ENCODE measurements at regions of chr19 and their contacts with region 1.

Region 1: DNA sequence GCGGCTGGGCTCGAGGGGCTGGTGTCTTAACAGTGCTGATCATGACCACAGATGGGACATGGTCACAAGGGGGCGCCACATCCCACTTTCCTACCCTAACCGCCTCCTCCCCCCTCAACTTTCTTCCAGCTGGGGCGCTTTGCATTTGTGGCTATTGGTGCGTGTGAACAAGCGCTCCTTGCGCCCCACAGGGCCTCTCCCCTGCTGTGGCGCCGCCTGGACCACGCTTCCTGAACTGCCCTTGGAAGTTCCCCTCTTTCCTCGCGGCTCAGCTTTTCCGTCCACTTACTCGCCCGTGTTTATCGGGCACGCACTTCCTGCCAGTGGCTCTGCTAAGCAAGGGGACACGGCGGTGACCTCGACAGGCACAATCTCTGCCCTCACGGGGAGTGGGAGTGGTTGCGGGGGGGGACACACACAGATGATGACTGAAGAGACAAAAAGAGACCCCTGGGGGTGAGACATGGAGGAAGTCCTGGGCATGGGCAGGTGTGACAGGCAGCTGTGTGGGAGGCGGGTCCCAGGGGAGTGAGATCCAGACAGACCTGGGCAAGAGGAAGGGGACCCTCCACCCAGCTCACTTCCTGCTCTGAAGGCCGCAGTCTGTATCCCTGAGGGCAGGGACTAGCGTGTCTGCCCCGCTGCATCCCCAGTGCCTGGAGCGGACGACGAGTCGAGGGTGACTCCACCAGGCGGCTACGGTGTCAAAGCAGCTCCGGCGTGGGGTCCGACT is 40.3 kb downstream of the ZNF787 start:
- DNase-seq: peak; percentile 88
- ATAC-seq: peak; percentile 61
- H3K4me3 Mint-ChIP-seq: peak overlapping the region; percentile 59
- H3K27ac Mint-ChIP-seq: no peak overlapping the region
- H3K4me1 Mint-ChIP-seq: peaks cover 10% of the 10 kb centered on the region
- H3K27me3 Mint-ChIP-seq: peaks cover 11% of the 10 kb centered on the region

Region 2: DNA sequence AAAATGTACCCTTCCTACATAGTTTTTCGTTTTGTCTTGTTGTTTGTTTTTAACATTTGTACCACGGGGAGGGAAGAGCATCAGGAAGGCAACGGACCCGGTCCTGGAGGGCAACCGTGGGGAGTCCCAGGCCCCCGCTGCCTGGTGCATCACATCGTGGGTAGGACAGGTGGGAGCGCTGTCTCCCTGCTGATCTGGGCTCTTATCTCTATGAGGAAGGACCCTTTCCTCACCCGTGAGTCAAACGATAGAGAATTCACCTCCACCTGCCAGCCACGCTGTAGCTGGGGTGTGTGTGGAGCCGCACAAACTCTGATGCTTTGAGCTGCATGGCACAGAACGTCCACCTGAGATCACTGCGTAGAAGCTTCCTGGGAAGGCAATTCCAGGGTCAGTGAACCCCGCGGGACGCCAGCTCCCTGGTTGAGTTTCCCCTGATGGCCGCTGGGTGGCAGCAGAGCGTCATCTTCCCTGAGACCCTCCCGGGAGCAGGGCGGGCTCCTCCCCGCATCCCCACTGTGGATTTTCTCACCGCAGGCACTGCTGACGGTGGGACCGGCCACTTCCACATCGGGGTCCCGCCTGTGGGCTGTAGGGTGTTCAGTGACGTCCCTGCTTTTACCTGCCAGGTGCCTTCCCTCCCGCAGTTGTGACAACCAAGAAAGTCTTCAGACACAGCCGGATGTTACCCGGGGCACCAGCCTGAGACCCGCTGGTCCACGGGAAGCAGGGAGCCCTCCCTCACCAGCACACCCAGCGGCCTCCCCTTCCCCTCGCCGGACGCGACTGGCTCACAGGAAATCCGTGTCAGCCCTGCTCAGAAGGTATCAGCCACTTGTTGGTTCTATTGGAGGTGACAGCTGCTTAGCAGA is 14.4 kb before region 1 on chr19:
- CTCF ChIA-PET with region 1: interaction called, 20 read pairs
- POLR2A ChIA-PET with region 1: no interaction called
- intact Hi-C with region 1: no loop called
- DNase-seq: peak; percentile 75
- ATAC-seq: peak; percentile 69
- H3K4me3 Mint-ChIP-seq: peak overlapping the region; percentile 50
- H3K27ac Mint-ChIP-seq: no peak overlapping the region
- H3K4me1 Mint-ChIP-seq: peaks cover 11% of the 10 kb centered on the region
- H3K27me3 Mint-ChIP-seq: peaks cover 16% of the 10 kb centered on the region

Region 3: GRCh38 chr19:56170261-56170660 is 89.4 kb after region 1 on chr19:
- CTCF ChIA-PET with region 1: interaction called, 9 read pairs
- POLR2A ChIA-PET with region 1: no interaction called
- intact Hi-C with region 1: loop called (anchors 1 to 2 kb)
- DNase-seq: no peak
- ATAC-seq: no peak
- H3K4me3 Mint-ChIP-seq: no peak overlapping the region
- H3K27ac Mint-ChIP-seq: no peak overlapping the region
- H3K4me1 Mint-ChIP-seq: peaks cover 3% of the 10 kb centered on the region
- H3K27me3 Mint-ChIP-seq: no peaks in the 10 kb centered on the region

Region 4: DNA sequence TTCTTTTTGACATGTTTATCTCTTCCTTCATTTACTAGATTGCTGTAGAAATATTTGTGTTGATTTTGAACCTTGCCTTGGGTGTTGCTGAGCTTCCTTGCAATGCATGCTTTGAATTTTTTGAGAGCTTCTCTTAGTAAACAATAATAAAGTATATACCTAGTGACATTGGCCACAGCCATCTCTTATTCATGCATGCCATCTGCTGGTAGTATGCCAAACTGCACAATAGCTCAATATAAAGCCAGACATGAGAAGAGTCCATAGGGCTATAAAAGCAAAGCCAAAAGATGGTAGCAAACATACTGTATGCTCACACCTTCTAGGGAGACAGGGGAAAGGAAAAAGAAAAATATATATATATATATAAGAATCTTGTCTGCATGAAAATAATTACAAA is 252.7 kb after region 1 on chr19:
- CTCF ChIA-PET with region 1: interaction called, 13 read pairs
- POLR2A ChIA-PET with region 1: no interaction called
- intact Hi-C with region 1: loop called in 1 of 2 experiments (anchors 2 kb)
- DNase-seq: peak; percentile 55
- ATAC-seq: no peak
- H3K4me3 Mint-ChIP-seq: no peak overlapping the region
- H3K27ac Mint-ChIP-seq: no peak overlapping the region
- H3K4me1 Mint-ChIP-seq: no peaks in the 10 kb centered on the region
- H3K27me3 Mint-ChIP-seq: no peaks in the 10 kb centered on the region

Region 5: GRCh38 chr19:56350416-56351045 is 269.7 kb after region 1 on chr19:
- CTCF ChIA-PET with region 1: interaction called, 6 read pairs
- POLR2A ChIA-PET with region 1: no interaction called
- intact Hi-C with region 1: loop called (anchors 1 to 2 kb)
- DNase-seq: peak; percentile 69
- ATAC-seq: peak; percentile 44
- H3K4me3 Mint-ChIP-seq: no peak overlapping the region
- H3K27ac Mint-ChIP-seq: no peak overlapping the region
- H3K4me1 Mint-ChIP-seq: no peaks in the 10 kb centered on the region
- H3K27me3 Mint-ChIP-seq: no peaks in the 10 kb centered on the region

Region 6: GRCh38 chr19:57057036-57057686 is 976.3 kb after region 1 on chr19:
- CTCF ChIA-PET with region 1: no interaction called
- POLR2A ChIA-PET with region 1: no interaction called
- intact Hi-C with region 1: no loop called
- DNase-seq: no peak
- ATAC-seq: no peak
- H3K4me3 Mint-ChIP-seq: no peak overlapping the region
- H3K27ac Mint-ChIP-seq: no peak overlapping the region
- H3K4me1 Mint-ChIP-seq: no peaks in the 10 kb centered on the region
- H3K27me3 Mint-ChIP-seq: no peaks in the 10 kb centered on the region

Region 7: DNA sequence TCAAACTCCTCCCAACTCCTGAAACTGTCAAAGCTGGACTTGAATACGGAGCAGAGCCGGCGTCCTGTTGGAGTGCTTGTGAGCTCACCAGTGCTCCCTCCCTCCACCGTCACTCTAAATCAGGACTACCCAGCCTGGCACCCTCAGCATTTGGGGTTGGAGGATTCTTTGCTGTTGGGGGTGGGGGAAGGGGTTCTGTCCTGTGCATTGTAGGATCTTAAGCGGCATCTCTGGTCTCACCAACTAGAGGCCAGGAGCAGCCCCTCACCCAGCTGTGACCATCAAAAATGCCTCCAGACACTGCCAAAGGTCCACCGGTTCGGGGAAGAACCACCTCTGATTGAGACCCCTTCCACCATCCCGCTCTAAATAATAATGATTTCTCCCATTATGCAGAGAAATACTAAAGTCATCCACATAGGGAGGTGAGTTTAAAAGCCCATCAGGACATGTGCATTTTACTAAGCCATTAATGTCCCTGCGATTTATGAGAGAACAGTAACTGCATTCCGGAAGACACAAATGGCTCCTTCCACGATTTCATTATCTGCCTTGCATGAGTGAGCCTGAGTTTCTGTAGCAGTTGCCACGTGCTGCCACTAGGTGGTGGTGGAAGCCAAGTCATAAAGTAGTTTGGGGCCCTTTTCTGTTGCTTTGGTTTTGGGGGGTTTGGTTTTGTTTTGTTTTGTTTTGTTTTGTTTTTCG is 1022.9 kb after region 1 on chr19:
- CTCF ChIA-PET with region 1: no interaction called
- POLR2A ChIA-PET with region 1: no interaction called
- intact Hi-C with region 1: loop called in 1 of 2 experiments (anchors 5 kb)
- DNase-seq: peak; percentile 74
- ATAC-seq: peak; percentile 83
- H3K4me3 Mint-ChIP-seq: peak overlapping the region; percentile 26
- H3K27ac Mint-ChIP-seq: no peak overlapping the region
- H3K4me1 Mint-ChIP-seq: peaks cover 8% of the 10 kb centered on the region
- H3K27me3 Mint-ChIP-seq: peaks cover 5% of the 10 kb centered on the region